ENCODE measurements at regions of chr18 and their contacts with region 1.

Region 1: GRCh38 chr18:77234504-77235365 is 14.9 kb upstream of the GALR1 start:
- DNase-seq: no peak
- ATAC-seq: no peak
- H3K4me3 ChIP-seq: no peak overlapping the region
- H3K27ac ChIP-seq: no peak overlapping the region
- H3K4me1 ChIP-seq: no peaks in the 10 kb centered on the region
- H3K27me3 ChIP-seq: peaks cover 0 to 23% (median 10%) of the 10 kb centered on the region in 7 donors
- CTCF ChIP-seq: no peak

Region 2: GRCh38 chr18:75322206-75322605 is 1912.5 kb before region 1 on chr18:
- intact Hi-C with region 1: loop called in 1 of 10 experiments (anchors 10 kb)
- DNase-seq: no peak
- ATAC-seq: no peak
- H3K4me3 ChIP-seq: no peak overlapping the region
- H3K27ac ChIP-seq: no peak overlapping the region
- H3K4me1 ChIP-seq: no peaks in the 10 kb centered on the region
- H3K27me3 ChIP-seq: no peaks in the 10 kb centered on the region
- CTCF ChIP-seq: no peak

Region 3: GRCh38 chr18:77087393-77088141 is 147.2 kb before region 1 on chr18:
- intact Hi-C with region 1: no loop called
- DNase-seq: peak; percentile 58 to 63
- ATAC-seq: peak; percentile 61 to 79 (median 73)
- H3K4me3 ChIP-seq: peak overlapping the region; percentile 3 to 59 (median 47)
- H3K27ac ChIP-seq: peak overlapping the region; percentile 20 to 91 (median 82)
- H3K4me1 ChIP-seq: peaks cover 19 to 64% (median 32%) of the 10 kb centered on the region in 9 donors
- H3K27me3 ChIP-seq: no peaks in the 10 kb centered on the region
- CTCF ChIP-seq: no peak